Head of caudate nucleus (tissue), 42 donors: ENCODE measurements at regions of chr21 and their contacts with region 1.

Region 1: GRCh38 chr21:36319765-36320420 is at the start of gene MORC3:
- DNase-seq: peak; percentile 94 to 99 (median 98)

Region 2: DNA sequence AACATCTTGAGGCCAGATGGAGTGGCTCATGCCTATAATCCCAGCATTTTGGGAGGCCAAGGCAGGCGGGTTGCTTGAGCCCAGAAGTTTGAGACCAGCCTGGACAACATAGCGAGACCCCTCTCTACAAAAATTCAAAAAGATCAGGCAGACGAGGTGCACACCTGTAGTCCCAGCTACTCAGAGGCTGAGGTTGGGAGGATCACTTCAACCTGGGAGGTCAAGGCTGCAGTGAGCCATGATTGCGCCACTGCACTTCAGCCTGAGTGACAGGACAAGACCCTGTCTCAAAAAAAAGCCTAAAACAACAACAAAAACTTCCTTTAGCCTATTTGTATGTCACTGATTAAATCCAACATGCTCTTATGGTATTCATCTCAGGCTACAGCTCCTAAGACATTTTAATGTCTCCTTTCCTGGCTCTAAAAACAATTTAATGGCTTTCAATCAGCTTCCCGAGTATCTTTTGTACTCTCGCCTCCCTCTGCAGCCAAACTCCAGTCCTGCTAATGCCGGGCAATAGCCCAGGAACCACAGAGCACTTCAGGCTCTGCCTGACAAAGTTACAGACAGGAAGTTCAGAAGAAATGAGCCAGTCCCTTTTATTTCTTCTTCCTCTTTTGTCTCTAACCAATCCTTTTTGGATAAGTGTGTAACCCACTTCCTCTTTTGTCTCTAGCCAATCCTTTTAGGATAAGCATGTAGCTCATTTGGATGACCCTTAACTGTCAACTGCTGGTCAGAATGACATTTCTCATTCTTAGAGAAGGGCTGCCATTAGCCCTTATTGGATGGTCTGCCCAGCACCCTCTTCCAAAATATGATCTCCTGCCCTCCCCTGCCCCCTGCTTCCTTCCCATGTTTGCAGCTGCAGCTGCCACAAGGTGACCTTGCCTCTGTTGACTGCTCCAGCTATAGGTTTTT is 169.8 kb before region 1 on chr21:
- intact Hi-C with region 1: loop called (anchors 5 kb)
- DNase-seq: peak in 12 of 42 donors; percentile 33 to 72 (median 52)

Region 3: DNA sequence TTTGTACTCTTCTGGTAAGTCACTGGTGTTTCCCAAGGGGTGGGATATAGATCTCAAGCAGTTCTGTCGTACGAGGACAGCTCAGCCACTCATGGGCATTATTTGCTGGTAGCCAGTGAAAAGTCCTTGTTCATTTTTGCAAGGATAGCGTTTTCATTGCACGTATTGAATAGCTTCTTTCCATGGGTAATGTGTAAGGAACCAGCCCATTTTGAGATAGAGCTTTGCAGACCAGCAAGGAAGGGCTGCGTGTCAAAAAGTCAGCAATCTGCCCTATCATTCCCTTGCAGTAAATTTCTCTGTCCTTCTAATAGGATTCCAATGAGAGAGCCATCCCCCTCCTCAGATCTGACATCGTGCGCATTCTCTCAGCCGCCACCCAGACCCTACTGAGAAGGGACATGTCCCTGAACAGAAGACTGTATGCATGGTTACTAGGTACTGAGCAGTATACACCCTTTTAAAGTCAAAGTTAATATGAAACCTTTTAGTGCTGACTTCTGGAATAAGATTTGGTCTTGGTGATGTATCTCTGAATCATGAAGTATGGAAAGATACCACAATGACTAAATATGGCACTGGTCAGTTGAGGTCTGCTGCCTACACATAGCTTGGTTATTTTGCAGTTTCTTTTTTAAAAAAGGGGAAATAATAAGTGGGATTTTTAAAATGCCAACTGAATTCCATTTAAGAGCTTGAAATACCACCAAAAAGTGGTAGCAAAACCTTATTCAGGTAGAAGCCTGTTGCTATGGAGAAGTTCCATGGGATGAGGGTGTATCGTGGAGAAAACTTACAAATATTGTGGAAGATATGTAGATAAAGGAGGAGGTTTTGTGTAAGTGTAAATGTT is 108.0 kb before region 1 on chr21:
- intact Hi-C with region 1: no loop called
- DNase-seq: no peak

Region 4: DNA sequence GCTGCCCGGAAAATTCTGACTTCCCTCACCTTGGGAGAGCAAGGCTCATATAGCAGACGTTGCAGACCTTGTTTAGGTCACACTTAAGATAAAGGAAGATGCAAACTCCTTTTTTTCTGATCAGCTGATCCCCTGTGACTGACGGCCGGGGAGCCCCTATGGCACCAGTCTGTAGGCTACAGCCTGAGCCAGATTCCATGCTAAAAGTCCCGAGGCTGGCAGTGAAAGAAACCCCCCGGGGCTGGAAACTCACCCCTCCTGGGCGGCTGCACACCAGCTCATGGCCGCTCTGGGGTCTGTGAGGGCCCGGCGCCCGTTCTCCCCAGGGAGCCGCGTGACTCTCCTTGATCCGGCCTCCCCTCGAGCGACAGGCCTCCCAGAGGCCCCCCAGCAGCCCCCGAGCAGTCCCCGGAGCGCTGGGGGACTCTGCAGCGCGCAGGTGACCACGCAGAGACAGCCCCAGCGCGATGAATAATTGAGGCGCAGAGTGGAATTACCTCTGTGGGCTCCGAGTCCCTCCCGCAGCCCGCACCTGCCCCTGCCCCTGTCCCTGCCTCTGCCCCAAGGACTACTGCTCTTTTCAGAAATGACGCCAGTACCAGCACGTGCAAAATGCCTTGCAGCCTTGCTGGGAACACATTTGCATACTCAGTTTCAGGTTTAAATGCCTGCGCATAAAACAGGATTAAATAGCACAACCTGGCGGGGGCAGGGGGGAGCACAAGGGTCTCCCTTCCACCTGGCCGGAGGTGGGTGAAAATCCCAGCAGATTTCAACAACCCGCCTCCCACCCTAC is 222.6 kb after region 1 on chr21:
- intact Hi-C with region 1: no loop called
- DNase-seq: no peak